Ascending aorta (tissue), 2 donors: ENCODE measurements at regions of chr17 and their contacts with region 1.

Region 1: DNA sequence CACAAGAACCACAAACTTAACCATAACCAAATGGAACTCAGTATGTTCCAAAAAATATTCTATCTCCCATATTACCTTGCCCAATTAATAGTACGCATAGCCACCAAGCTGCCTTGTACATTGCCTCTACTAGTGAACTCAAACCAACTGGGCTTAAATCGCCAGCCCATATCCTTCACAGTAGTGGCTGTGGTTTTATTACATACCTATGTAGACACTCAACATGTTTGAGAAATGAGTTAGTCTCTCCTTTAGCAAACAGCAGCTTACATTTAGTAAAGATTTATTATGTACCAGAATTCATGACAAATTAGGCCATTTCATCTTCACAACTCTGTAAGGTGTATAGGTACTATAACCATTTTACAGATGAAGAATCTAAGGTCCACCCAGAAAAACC is 41.4 kb downstream of the GRB2 start:
- DNase-seq: no peak
- H3K4me3 ChIP-seq: no peak overlapping the region
- H3K27ac ChIP-seq: no peak overlapping the region
- H3K4me1 ChIP-seq: peaks cover 5 to 49% of the 10 kb centered on the region in 2 donors
- H3K27me3 ChIP-seq: no peaks in the 10 kb centered on the region
- CTCF ChIP-seq: no peak

Region 2: DNA sequence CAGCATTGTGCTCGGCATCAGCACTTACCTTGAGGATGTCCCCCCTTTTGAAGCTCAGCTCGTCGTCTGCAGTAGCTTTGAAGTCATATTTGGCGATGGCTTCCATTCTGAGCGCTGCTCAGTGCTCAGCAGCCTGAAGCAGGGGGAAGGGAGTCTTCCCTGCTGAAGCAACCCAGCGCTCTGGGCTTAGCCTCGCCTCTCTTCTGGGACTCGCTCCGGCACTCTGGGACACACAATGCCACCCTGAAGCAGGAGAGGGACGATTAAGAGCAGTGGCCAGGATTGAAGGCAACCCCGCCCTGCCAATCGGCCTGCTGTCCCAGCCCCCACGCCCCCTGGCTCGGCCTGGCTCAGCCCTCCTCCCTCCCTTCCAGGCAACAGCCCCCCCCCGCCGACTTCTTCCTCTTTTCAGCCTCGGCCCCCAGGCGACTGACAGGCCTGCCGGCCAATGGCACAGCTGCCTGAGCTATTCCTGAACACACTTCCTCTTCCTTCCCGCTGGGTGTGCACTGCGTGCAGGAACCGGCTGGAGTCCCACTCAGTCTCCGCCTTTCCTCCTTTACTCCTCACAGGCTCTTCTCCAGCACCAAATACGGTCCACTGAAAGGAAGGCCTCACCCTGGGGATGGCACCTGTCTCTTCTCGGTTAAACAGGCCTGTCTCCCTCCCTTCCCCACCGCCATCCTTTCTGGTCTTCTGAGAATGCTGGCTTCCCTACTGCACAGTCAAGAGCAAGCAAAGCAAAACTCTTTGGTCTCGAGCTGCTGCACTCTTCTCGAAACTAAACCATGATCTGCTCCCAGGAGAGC is 29.6 kb after region 1 on chr17:
- intact Hi-C with region 1: loop called (anchors 5 kb)
- DNase-seq: peak; percentile 91 to 99
- H3K4me3 ChIP-seq: peak overlapping the region; percentile 68 to 78
- H3K27ac ChIP-seq: peak overlapping the region; percentile 76 to 88
- H3K4me1 ChIP-seq: peaks cover 16 to 42% of the 10 kb centered on the region in 2 donors
- H3K27me3 ChIP-seq: no peaks in the 10 kb centered on the region
- CTCF ChIP-seq: peak in 2 of 3 experiments; percentile 18 to 29

Region 3: DNA sequence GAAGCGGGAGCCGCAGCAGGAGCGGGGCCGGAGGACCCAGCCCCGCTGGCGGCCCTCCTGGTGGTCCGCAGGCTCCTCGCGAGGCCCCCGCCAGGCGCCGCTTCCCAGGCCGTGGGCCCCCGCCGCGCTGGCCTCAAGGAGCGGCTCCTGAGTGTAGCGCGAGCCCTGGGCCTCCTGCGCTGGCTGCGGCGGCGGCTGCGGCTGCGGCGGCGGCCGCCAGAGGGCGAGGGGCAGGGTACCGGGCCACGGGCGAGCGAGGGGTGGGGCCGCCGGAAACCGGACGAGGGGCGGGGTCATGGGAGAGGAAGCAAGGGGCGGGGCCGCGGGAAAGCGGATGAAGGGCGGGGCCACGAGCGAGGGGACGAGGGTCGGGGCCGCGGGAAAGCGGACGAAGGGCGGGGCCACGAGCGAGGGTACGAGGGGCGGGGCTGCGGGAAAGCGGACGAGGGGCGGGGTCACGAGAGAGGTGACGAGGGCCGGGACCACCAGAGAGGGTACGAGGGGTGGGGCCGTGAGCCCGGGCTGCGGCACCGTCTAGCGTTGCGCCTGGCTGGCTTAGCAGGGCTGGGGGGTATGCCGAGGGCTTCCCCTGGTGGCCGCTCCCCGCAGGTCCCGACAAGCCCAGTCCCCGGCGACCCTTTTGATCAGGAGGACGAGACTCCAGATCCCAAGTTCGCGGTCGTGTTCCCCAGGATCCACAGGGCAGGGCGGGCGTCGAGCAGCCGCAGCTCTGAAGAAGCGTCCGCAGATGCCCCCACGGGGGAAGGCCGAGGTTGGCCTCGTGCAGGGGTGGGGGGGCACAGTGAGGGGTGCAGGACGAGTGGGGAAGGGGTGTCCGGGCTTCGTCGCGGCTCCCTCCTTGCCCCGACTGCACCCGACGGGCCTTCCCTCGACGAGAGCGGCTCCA is 225.2 kb after region 1 on chr17:
- intact Hi-C with region 1: no loop called
- DNase-seq: peak; percentile 54 to 93
- H3K4me3 ChIP-seq: peak overlapping the region; percentile 71 to 79
- H3K27ac ChIP-seq: peak overlapping the region; percentile 86 to 87
- H3K4me1 ChIP-seq: no peaks in the 10 kb centered on the region
- H3K27me3 ChIP-seq: no peaks in the 10 kb centered on the region
- CTCF ChIP-seq: peak; percentile 46 to 97 (median 53)